ENCODE measurements at regions of chr5 and their contacts with region 1.

Region 1: GRCh38 chr5:7754992-7755596 is 95.8 kb downstream of the CFAP90 start:
- DNase-seq: no peak
- H3K4me3 ChIP-seq: no peak overlapping the region
- H3K27ac ChIP-seq: no peak overlapping the region
- H3K4me1 ChIP-seq: peaks cover 0 to 6% of the 10 kb centered on the region in 2 donors
- H3K27me3 ChIP-seq: no peaks in the 10 kb centered on the region
- CTCF ChIP-seq: peak; percentile 41 to 75 (median 63)

Region 2: DNA sequence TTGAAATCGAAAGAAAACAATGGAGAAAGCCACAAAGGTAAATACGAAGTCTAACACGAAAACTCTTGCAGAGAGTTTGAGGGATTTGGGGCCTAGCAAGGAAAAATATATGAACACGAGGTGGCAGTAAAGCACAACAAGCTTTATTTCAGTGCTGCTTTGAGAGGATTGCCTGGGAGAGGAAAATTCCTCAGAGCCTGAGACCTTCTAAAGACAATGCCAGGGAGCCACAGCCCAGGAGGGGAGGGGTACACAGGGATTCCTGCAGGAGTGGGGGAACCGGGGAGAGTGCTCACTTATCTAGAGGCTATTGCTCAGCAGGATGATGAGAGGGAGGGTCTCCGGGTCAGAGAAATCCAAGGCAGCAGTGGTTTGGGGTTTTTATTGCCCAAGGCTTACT is 494.0 kb before region 1 on chr5:
- intact Hi-C with region 1: loop called (anchors 1 kb)
- DNase-seq: no peak
- H3K4me3 ChIP-seq: no peak overlapping the region
- H3K27ac ChIP-seq: no peak overlapping the region
- H3K4me1 ChIP-seq: no peaks in the 10 kb centered on the region
- H3K27me3 ChIP-seq: no peaks in the 10 kb centered on the region
- CTCF ChIP-seq: peak; percentile 29 to 57 (median 33)

Region 3: DNA sequence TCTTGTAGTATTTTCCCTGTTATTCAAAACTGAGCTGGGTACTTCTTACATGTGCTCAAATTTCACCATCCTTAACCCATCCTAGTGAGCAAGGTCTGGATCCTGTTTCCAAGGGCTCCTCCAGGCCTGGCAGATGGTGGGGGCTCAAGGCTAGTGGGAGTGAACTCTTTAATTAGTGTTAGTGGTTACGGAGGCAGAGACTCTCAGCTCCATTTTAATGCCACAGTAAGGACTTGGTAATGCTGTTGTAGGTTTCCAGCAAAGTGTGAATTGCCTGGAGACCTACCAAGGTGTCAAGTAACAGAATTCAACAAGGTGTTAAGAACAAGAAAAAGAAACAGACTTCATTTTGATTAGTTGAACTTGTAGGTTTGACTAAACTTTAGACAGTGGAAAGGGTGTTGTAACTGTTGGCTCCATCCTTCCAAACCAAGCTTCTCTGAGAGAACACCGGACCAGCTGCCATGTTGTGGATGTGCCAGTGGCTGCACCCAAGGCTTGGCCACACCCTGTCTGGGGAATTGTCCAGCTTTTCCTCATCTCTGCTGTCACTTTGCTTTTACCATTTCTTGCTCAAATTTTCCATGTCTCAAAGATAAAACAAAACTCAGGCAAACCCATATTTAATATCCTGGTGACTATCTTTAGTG is 260.5 kb before region 1 on chr5:
- intact Hi-C with region 1: loop called (anchors 5 kb)
- DNase-seq: no peak
- H3K4me3 ChIP-seq: no peak overlapping the region
- H3K27ac ChIP-seq: peak overlapping the region; percentile 12 to 28
- H3K4me1 ChIP-seq: peaks cover 0 to 12% of the 10 kb centered on the region in 2 donors
- H3K27me3 ChIP-seq: no peaks in the 10 kb centered on the region
- CTCF ChIP-seq: no peak

Region 4: GRCh38 chr5:7941692-7942091 is 186.6 kb after region 1 on chr5:
- intact Hi-C with region 1: no loop called
- DNase-seq: no peak
- H3K4me3 ChIP-seq: no peak overlapping the region
- H3K27ac ChIP-seq: no peak overlapping the region
- H3K4me1 ChIP-seq: no peaks in the 10 kb centered on the region
- H3K27me3 ChIP-seq: no peaks in the 10 kb centered on the region
- CTCF ChIP-seq: no peak

Region 5: GRCh38 chr5:8481002-8481401 is 725.9 kb after region 1 on chr5:
- intact Hi-C with region 1: no loop called
- DNase-seq: no peak
- H3K4me3 ChIP-seq: no peak overlapping the region
- H3K27ac ChIP-seq: no peak overlapping the region
- H3K4me1 ChIP-seq: no peaks in the 10 kb centered on the region
- H3K27me3 ChIP-seq: no peaks in the 10 kb centered on the region
- CTCF ChIP-seq: no peak